Activated CD4-positive, alpha-beta memory T cell treated with anti-CD3 and anti-CD28 coated beads for 36 hours (primary cell): ENCODE measurements at regions of chr19 and their contacts with region 1.

Region 1: DNA sequence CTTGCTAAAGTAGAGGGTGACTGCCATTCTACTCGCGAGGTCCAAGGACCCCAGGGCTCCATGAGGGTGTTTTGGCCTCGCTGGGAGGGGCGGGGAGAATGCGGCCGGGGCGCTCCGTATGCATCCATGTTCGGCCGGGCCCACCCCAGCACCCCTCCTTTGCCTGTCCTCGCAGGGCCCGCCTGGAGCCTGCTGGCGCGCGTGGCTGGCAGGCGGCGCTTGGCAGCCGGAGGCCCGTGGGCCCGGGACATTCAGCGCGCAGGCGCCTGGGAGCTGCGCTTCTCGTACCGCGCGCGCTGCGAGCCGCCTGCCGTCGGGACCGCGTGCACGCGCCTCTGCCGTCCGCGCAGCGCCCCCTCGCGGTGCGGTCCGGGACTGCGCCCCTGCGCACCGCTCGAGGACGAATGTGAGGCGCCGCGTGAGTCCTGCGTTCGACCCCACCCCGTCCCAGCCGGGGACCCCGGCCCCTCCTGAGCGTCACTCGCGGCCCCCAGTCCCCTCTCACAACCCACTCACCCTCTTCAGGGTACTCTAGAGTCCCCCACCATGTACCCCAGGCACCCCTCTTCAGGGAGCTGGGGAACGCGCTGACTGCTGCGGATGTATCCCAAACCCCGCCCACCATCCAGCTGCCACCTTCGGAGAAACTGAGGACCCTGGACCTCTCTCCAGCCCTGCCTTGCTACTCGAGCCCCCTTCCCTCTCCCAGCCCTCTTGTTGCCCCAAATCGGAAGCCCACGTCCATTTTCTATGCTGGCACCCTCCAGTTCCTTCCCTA is 4.1 kb downstream of the DLL3 start:
- DNase-seq: peak; percentile 84
- H3K4me3 Mint-ChIP-seq: no peak overlapping the region
- H3K27ac Mint-ChIP-seq: no peak overlapping the region
- H3K4me1 Mint-ChIP-seq: peaks cover 33% of the 10 kb centered on the region
- H3K27me3 Mint-ChIP-seq: peaks cover 56% of the 10 kb centered on the region

Region 2: GRCh38 chr19:39131235-39131755 is 371.5 kb before region 1 on chr19:
- CTCF ChIA-PET with region 1: no interaction called
- POLR2A ChIA-PET with region 1: no interaction called
- intact Hi-C with region 1: no loop called
- DNase-seq: no peak
- H3K4me3 Mint-ChIP-seq: no peak overlapping the region
- H3K27ac Mint-ChIP-seq: no peak overlapping the region
- H3K4me1 Mint-ChIP-seq: peaks cover 40% of the 10 kb centered on the region
- H3K27me3 Mint-ChIP-seq: no peaks in the 10 kb centered on the region

Region 3: DNA sequence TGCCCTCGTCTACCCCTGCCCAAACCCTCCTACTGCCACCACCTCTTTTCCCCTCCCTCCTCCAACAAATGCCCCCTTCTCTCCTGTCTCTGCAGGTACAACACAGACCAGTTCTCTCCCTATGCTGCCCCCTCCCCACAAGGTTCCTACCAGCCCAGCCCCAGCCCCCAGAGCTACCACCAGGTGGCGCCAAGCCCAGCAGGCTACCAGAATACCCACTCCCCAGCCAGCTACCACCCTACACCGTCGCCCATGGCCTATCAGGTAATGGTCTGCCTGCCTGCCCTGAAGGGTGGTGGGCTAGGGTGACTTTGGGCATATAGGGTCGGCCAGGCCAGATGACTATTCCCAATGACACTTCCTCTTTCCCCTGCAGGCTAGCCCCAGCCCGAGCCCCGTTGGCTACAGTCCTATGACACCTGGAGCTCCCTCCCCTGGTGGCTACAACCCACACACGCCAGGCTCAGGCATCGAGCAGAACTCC is 28.6 kb before region 1 on chr19:
- CTCF ChIA-PET with region 1: interaction called, 11 read pairs
- POLR2A ChIA-PET with region 1: interaction called, 3 read pairs
- intact Hi-C with region 1: no loop called
- DNase-seq: peak; percentile 76
- H3K4me3 Mint-ChIP-seq: no peak overlapping the region
- H3K27ac Mint-ChIP-seq: no peak overlapping the region
- H3K4me1 Mint-ChIP-seq: peaks cover 25% of the 10 kb centered on the region
- H3K27me3 Mint-ChIP-seq: no peaks in the 10 kb centered on the region

Region 4: GRCh38 chr19:39514840-39515550 is 12.2 kb after region 1 on chr19 and contains the start of gene SELENOV:
- CTCF ChIA-PET with region 1: interaction called, 16 read pairs
- POLR2A ChIA-PET with region 1: interaction called, 3 read pairs
- intact Hi-C with region 1: no loop called
- DNase-seq: no peak
- H3K4me3 Mint-ChIP-seq: peak within 1 kb of the TSS; percentile 43
- H3K27ac Mint-ChIP-seq: no peak within 1 kb of the TSS
- H3K4me1 Mint-ChIP-seq: peaks cover 9% of the 10 kb centered on the region
- H3K27me3 Mint-ChIP-seq: peaks cover 40% of the 10 kb centered on the region
- total RNA-seq, gene SELENOV: not detected

Region 5: DNA sequence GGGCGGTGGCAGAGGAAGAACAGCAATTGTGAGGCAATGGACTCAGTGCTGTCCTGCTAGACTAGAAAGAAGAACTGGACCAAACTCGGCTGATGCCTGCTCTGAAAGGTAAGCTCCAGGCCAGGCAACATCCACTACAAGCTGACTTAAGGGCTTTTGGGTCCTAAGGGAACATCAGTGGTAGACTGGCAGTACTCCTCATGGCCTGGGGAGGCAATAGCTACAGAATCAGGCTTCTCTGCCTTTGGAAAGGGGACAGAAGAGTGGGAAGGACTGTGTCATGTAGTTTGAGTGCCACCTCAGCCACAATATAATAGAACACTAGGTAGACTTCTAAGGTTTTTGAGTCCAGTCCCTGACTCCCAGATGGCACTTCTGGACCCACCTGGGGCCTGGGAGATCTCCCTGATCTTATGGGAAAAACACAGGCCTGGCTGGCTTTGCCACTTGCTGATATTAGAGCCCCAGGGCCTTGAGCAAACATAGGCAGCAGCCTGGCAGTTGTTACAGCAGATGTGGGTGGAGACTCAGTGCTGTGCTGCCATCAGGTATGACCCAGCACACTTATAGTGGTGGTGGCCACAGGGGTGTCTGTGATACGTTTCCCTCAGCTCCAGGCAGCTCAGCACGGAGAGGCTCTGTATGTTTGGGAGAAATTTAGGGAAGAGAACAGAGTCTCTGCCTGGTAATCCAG is 244.2 kb after region 1 on chr19:
- CTCF ChIA-PET with region 1: no interaction called
- POLR2A ChIA-PET with region 1: no interaction called
- intact Hi-C with region 1: no loop called
- DNase-seq: no peak
- H3K4me3 Mint-ChIP-seq: no peak overlapping the region
- H3K27ac Mint-ChIP-seq: no peak overlapping the region
- H3K4me1 Mint-ChIP-seq: no peaks in the 10 kb centered on the region
- H3K27me3 Mint-ChIP-seq: peaks cover 12% of the 10 kb centered on the region